HEK293T (cell line): ENCODE measurements at regions of chr22 and their contacts with region 1.

Region 1: GRCh38 chr22:41732096-41732772 is 32.9 kb downstream of the MEI1 start:
- DNase-seq: no peak

Region 2: DNA sequence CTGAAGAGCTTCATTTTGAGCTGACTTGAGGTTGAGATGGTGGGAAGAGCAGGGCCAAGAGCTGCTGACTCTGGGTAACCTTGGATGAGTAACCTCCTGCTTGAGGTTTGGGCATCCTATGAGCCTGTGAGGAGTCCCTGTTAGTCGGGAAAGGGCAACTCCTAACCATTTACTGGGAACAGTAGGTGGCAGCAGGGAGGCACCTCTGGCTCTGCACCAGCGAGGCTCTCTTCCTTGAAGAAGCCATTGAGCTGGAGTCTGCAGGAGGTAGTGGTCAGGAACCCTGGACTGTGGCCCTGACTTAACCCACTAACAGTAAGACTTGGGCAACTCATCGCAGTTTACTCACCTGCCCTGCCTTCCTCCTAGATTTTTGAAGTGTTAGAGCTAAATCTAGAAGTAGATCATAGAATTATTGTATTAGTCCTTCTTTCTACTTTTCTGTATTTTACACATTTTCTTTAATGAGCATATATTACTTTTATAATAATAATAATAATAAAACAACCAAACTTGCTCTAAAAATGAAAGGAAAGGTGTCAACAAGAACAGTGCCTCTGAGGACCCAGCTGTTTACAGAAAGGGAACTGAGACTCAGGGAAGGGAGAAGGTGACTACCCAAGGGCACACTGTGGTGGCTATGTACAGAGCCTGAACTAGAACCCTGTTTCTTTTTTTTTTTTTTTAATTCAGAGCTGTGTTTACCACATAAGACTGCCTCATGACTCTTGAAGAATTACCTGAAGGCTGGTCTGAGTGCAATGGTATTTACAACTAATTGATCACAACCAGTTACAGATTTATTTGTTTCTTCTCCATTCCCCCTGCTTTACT is 14.6 kb after region 1 on chr22:
- CTCF ChIA-PET with region 1: interaction called, 14 read pairs
- POLR2A ChIA-PET with region 1: no interaction called
- DNase-seq: peak; percentile 81